Left ventricle myocardium superior (tissue), 1 donor: ENCODE measurements at regions of chr7 and their contacts with region 1.

Region 1: GRCh38 chr7:23679898-23680413 is at the start of gene FAM221A:
- DNase-seq: peak; percentile 95
- ATAC-seq: peak; percentile 100
- total RNA-seq, gene FAM221A: 2.1 TPM

Region 2: DNA sequence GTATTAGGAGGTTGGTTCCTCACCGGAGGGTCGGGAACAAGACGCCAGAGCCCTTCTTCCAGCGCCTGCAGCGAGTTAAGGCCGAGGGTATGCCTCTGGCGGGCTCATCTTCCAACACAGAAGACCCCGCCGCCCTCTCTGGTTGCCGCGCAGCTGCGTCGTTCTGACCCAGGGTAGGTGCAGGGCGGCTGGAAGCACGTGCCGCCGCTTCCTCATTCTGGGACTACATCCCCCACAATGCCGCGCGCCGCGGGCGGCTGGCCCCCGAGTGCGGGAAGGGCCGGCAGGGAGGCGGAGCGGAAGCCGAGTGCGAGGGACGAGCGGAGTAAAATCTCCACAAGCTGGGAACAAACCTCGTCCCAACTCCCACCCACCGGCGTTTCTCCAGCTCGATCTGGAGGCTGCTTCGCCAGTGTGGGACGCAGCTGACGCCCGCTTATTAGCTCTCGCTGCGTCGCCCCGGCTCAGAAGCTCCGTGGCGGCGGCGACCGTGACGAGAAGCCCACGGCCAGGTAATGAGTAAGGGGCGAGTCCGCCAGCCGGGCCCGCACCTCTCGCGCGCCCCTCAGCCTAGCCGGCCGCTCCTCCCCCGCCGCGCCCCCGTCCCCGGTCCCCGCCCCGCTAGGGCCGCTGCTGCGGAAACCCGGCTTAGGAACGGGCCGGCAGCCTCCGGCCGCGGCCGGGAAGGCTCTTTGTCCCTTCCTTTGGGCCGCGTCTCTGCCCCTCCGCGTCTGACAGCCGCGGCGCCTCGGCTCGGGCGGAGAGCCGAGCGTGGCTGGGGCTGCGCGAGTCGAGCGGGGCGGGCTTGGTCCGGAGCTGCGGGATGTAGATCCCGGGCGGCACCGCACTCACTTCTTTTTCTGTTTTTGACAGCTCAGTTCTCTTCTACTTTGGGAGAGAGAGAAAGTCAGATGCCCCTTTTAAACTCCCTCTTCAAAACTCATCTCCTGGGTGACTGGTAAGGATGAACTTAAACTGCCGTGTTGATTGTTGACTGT is 82.6 kb before region 1 on chr7 and contains the start of gene CCDC126:
- intact Hi-C with region 1: loop called (anchors 10 kb)
- DNase-seq: peak; percentile 96
- ATAC-seq: peak; percentile 99
- total RNA-seq, gene CCDC126: 11.4 TPM

Region 3: GRCh38 chr7:23783115-23783514 is 103.2 kb after region 1 on chr7:
- intact Hi-C with region 1: no loop called
- DNase-seq: no peak
- ATAC-seq: no peak